Naive thymus-derived CD4-positive, alpha-beta T cell (primary cell): ENCODE measurements at regions of chr6 and their contacts with region 1.

Region 1: DNA sequence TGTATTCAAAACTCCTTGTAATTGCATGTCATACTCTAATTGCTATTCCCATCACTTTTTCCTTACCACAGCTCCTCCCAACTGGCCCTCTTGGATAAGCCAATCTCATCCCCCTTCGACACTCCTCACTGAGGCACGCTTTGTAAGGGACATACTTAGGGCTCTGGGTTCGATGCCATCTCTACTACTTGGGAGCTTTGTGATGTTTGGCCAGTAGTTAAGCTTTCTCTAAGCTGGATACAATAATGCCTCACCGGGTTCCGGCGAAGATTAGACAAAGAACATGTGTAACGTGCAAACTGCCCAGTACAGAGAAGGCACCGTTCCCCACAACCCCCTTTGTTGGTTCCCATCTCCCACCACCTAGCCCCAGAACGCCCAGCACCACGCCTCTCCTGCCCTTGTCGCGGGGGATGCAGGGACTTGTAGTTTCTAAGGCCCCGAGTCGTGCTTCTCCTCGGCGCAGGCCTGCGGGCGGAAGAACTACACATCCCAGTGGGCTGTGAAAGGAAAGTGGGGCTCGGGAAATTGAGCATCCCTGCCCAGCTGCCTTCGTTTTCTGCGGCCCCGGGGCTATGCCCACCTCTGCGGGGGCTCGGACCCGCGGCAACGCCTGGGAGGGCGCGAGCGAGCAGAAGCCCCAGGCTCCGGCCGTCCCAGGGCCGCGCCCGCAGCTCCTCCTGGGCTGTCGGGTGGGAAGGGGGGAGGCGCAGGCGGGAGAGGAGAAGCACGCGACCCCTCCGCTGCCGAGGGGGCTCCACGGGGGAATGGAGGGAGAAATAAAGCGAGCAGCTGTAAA is 1.1 kb upstream of the ZDHHC14 start:
- DNase-seq: peak; percentile 63 to 89 (median 84)
- ATAC-seq: peak; percentile 85
- H3K4me3 ChIP-seq: peak overlapping the region; percentile 71
- H3K4me3 Mint-ChIP-seq: peak overlapping the region; percentile 80 to 93 (median 84)
- H3K27ac ChIP-seq: peak overlapping the region; percentile 80
- H3K27ac Mint-ChIP-seq: peak overlapping the region; percentile 2 to 89 (median 78)
- H3K4me1 ChIP-seq: peaks cover 4 to 5% of the 10 kb centered on the region in 2 donors
- H3K4me1 Mint-ChIP-seq: peaks cover 7 to 35% (median 18%) of the 10 kb centered on the region in 7 donors
- H3K27me3 ChIP-seq: no peaks in the 10 kb centered on the region
- H3K27me3 Mint-ChIP-seq: peaks cover 0 to 14% (median 4%) of the 10 kb centered on the region in 5 donors

Region 2: GRCh38 chr6:157221007-157221816 is 158.6 kb before region 1 on chr6:
- CTCF ChIA-PET with region 1: no interaction called
- POLR2A ChIA-PET with region 1: no interaction called
- intact Hi-C with region 1: loop called in 1 of 2 experiments (anchors 1 kb)
- DNase-seq: peak; percentile 71 to 85 (median 82)
- ATAC-seq: peak; percentile 85
- H3K4me3 ChIP-seq: peak overlapping the region; percentile 65
- H3K4me3 Mint-ChIP-seq: peak overlapping the region; percentile 78 to 97 (median 86)
- H3K27ac ChIP-seq: peak overlapping the region; percentile 49
- H3K27ac Mint-ChIP-seq: peak overlapping the region; percentile 48 to 99 (median 85)
- H3K4me1 ChIP-seq: peaks cover 0 to 28% of the 10 kb centered on the region in 2 donors
- H3K4me1 Mint-ChIP-seq: peaks cover 31 to 55% (median 39%) of the 10 kb centered on the region in 7 donors
- H3K27me3 ChIP-seq: no peaks in the 10 kb centered on the region
- H3K27me3 Mint-ChIP-seq: peaks cover 0 to 8% (median 2%) of the 10 kb centered on the region in 5 donors

Region 3: DNA sequence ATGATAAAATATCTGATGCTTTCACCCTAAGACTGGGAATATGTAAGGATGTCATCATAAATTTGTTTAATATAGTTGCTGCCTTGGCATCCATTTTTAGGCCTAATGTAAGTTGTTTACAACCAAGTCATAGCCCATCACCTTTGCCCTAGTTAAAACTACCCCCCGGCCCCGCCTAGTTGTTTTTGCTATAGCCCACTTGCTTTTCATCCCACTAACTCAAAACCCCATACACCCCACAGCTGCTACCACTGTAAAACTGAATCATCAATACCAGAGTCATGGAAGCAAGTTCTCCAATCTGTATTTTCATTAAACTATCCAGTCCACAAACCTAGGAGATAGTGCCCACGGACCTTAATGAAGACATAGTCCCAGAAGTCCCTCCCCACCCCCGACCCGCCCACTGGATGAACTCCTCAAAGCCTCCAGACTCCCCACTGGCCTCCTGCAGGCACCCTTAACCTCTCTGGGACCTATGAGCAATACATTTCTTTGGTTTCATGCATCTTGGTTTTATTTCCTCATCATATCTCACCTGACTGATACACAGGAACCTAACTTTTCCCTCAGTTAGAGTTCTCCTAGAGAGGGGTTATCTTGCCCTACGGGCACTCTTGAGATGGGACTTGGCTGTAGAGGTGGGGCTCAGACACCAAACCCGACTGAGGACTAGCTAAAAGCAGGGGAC is 11.4 kb before region 1 on chr6:
- CTCF ChIA-PET with region 1: no interaction called
- POLR2A ChIA-PET with region 1: interaction called, 6 read pairs
- intact Hi-C with region 1: loop called (anchors 1 kb)
- DNase-seq: no peak
- ATAC-seq: no peak
- H3K4me3 ChIP-seq: no peak overlapping the region
- H3K4me3 Mint-ChIP-seq: no peak overlapping the region
- H3K27ac ChIP-seq: no peak overlapping the region
- H3K27ac Mint-ChIP-seq: no peak overlapping the region
- H3K4me1 ChIP-seq: peaks cover 4 to 17% of the 10 kb centered on the region in 2 donors
- H3K4me1 Mint-ChIP-seq: peaks cover 11 to 20% (median 18%) of the 10 kb centered on the region in 7 donors
- H3K27me3 ChIP-seq: peaks cover 0 to 14% of the 10 kb centered on the region in 2 donors
- H3K27me3 Mint-ChIP-seq: peaks cover 21 to 65% (median 36%) of the 10 kb centered on the region in 5 donors

Region 4: GRCh38 chr6:157597446-157598312 is 217.8 kb after region 1 on chr6:
- CTCF ChIA-PET with region 1: no interaction called
- POLR2A ChIA-PET with region 1: no interaction called
- intact Hi-C with region 1: loop called (anchors 1 kb)
- DNase-seq: peak in 4 of 9 donors; percentile 8 to 27 (median 18)
- ATAC-seq: peak; percentile 56
- H3K4me3 ChIP-seq: no peak overlapping the region
- H3K4me3 Mint-ChIP-seq: no peak overlapping the region
- H3K27ac ChIP-seq: no peak overlapping the region
- H3K27ac Mint-ChIP-seq: no peak overlapping the region
- H3K4me1 ChIP-seq: no peaks in the 10 kb centered on the region
- H3K4me1 Mint-ChIP-seq: peaks cover 0 to 6% (median 0%) of the 10 kb centered on the region in 7 donors
- H3K27me3 ChIP-seq: no peaks in the 10 kb centered on the region
- H3K27me3 Mint-ChIP-seq: no peaks in the 10 kb centered on the region

Region 5: DNA sequence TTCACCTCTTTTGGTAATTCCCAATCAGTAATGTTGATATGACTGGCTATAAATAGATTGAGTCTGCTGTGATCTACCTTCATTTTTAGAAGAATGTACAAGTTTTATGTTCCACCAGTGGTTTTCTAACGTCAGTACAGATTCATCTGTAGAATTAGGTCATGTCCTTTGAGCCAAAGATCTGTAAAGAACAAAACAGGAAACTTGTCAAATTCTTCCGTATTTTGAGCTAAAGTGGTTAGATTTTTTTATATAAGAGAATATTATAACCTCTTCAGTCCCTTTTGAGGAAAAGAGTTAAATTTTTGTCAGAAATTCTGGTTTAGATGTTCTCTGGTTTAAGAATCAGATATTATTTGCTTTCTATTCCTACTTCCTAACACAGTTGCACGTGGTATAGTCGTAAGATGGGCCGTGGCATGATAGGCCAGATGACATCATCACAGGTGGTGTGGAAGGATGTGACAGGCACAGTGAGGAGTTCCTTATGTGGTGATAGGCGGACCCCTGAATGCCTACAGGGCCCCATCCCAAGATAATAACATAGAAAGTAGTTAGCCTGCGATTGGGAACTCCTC is 505.4 kb after region 1 on chr6:
- CTCF ChIA-PET with region 1: no interaction called
- POLR2A ChIA-PET with region 1: no interaction called
- intact Hi-C with region 1: loop called in 1 of 2 experiments (anchors 5 kb)
- DNase-seq: peak in 7 of 9 donors; percentile 74 to 90 (median 86)
- ATAC-seq: peak; percentile 89
- H3K4me3 ChIP-seq: no peak overlapping the region
- H3K4me3 Mint-ChIP-seq: peak overlapping the region; percentile 30 to 78 (median 54)
- H3K27ac ChIP-seq: peak overlapping the region; percentile 93
- H3K27ac Mint-ChIP-seq: peak overlapping the region; percentile 86 to 99 (median 96)
- H3K4me1 ChIP-seq: peaks cover 0 to 33% of the 10 kb centered on the region in 2 donors
- H3K4me1 Mint-ChIP-seq: peaks cover 31 to 92% (median 85%) of the 10 kb centered on the region in 7 donors
- H3K27me3 ChIP-seq: no peaks in the 10 kb centered on the region
- H3K27me3 Mint-ChIP-seq: peaks cover 0 to 3% (median 0%) of the 10 kb centered on the region in 5 donors

Region 6: DNA sequence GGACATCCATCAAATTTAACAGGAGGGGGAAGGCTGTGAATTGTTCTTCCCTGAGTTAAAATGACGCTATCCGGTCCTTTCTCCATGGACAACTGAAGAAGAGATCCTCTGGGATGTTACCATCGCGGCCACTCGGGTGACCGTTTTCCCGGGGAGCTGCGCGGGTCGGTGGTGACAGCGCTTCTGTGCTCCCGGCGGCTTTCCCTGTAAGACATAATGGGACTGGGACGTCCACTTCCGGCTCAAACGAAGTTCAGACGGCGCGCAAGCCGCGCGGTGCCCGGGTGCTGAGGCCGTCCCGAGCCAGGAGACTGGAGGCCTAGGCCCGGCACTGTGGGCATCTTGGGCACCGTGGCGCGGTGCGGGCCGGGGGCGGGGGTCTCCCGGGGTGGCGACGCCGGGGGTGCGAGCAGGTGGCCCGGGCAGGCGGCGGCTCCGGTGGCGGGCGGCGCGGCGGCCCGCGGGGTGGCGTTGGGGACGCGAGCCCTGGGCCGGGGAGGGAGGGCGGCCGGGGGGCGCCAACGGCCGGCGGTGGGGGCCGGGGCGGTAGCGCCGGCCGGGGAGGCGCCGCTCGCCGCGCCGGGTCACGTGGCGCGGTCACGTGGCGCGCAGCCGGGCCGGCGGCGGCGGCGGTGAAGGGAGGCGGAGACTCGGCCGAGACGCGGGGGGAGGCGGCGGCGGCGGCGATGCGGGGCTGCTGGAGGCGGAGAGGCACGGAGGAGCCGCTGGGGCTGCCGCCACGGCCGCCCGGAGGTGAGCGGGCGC is 851.9 kb after region 1 on chr6:
- CTCF ChIA-PET with region 1: no interaction called
- POLR2A ChIA-PET with region 1: no interaction called
- intact Hi-C with region 1: loop called in 1 of 2 experiments (anchors 5 kb)
- DNase-seq: peak; percentile 57 to 84 (median 71)
- ATAC-seq: peak; percentile 86
- H3K4me3 ChIP-seq: peak overlapping the region; percentile 62
- H3K4me3 Mint-ChIP-seq: peak overlapping the region; percentile 85 to 96 (median 92)
- H3K27ac ChIP-seq: peak overlapping the region; percentile 77
- H3K27ac Mint-ChIP-seq: peak overlapping the region; percentile 86 to 94 (median 89)
- H3K4me1 ChIP-seq: peaks cover 6 to 18% of the 10 kb centered on the region in 2 donors
- H3K4me1 Mint-ChIP-seq: peaks cover 22 to 44% (median 38%) of the 10 kb centered on the region in 7 donors
- H3K27me3 ChIP-seq: no peaks in the 10 kb centered on the region
- H3K27me3 Mint-ChIP-seq: peaks cover 0 to 14% (median 0%) of the 10 kb centered on the region in 5 donors